ENCODE measurements at regions of chr11 and their contacts with region 1.

Region 1: DNA sequence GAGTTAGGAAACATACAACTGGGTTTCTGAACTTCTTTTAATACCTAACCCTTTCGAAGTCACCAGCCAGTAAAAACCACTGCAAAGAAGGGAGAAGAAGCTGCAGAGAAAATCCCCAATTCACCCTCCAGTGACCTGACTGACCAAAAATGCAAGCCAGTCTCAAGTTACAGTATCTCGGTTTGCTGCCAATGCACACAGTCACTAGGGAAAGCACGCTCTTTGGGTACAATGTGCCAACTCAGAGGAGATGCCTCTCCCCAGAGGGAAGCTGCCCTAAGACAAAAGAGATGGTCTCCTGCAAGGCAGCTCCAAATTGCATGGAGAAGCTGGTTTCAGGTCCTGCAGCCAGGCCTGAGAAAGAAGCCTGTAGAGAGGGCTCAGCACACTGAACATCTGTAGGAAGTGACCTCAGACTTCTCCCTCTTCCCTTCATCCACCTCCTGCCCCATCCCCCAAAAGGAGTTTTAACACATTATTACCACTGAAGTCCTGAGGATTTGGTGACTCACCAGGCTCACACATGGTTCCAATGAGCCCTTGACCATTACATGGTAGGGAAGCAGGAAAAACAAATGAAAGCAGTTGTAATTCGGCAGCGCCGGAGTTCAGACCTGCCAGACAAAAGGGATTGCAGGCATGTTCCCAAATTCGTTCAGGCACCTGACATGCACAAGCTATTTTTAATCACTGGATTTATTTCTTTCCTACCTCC is 90.1 kb downstream of the ETS1 start:
- DNase-seq: peak; percentile 90
- H3K4me3 ChIP-seq: peak overlapping the region; percentile 26
- CTCF ChIP-seq: no peak

Region 2: GRCh38 chr11:128522055-128522942 is 25.1 kb after region 1 on chr11:
- CTCF ChIA-PET with region 1: interaction called, 3 read pairs
- POLR2A ChIA-PET with region 1: interaction called, 10 read pairs
- DNase-seq: peak; percentile 97
- H3K4me3 ChIP-seq: peak overlapping the region; percentile 82
- CTCF ChIP-seq: no peak

Region 3: DNA sequence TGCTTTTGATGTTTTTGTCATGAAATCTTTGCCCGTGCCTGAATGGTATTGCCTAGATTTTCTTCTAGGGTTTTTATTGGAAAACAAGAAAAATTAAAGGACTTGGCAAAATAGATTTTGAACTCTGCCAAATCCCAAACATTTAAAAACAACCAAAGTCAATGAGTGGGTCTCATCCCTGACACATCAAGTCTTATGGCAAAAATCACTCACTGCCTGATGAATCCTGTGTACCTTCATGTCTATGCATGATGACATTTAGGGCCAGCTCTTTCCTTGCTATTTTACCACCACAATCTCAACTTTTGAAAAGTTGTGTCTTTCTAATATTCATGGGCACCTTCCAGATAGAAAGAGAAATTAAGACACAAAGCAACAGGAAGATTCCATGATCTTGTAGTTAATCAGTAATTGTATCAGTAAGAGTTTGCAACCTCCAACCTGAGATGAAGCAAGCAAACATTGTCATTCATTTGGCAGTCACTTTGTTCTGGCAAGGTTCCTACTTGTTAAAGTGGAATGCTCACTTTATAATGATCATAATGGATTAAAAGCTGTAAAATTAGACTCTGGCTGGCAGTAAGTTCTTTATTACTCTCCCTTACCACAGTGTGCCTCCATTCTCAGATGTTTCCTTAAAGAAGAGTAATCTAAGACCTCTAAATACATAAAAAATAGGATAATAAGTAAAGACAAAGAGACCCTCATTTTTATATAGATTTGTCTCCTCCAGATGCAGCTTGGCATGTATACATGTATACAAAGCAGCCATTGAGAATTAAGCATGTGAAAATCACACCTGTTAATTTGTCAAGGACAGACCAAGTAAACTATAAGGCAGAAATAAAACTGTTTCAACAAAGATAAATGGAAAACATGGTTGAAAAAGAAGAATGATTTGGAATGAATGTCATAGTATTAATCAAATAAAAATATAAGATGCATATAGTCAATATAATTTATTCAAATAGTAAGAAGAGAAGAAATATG is 38.5 kb after region 1 on chr11:
- CTCF ChIA-PET with region 1: no interaction called
- POLR2A ChIA-PET with region 1: no interaction called
- DNase-seq: no peak
- H3K4me3 ChIP-seq: no peak overlapping the region
- CTCF ChIP-seq: no peak

Measured in AG04449 (cell line).